ENCODE measurements at regions of chr19 and their contacts with region 1.

Region 1: DNA sequence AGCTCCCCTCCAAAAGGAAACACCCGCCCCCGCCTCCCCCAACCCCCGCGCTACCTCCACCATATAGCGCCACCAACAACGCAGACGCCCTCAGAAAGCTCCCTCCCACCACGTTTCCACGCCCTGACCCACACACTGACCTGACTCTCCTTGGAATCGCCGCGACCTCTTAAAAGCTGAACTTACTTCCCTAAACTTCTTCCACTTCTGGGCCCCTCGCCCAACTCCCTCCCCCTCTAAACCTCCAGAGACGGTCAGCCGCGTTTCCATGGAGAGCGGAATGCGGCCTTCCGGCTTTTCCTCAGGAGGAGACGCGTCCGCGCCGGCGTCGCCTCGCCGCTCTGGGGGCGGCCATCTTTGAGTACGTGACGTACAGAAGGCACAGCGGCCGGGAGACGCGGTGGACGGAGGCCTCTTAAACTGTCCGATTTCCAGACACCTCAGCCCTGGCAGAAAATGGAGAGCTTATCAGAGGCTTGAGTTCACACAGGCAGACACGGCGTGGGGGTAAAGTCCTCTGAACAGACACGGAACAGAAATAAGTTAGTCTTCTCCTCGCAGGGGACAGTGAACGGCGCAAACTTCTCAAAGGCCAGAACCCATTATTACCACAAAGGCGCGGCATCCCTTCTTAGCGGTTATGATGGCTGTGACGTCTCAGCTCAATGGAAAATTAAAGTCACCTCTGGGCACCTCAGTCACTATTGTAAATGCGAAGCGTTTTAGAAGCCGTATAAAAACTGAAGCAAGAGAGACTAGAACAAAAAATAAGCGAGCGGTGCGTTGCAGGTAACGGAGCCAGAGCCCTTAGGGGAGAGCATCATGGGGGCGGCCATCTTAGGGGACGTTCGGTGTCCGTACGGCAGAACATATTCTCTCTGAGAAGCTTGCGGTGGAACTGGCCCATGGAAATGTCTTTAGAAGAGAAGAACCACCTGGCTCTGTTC is at the start of gene ZNF432:
- DNase-seq: peak; percentile 95
- H3K4me3 ChIP-seq: peak within 1 kb of the TSS; percentile 55
- H3K27ac ChIP-seq: peak within 1 kb of the TSS; percentile 92
- H3K4me1 ChIP-seq: no peaks in the 10 kb centered on the region
- H3K27me3 ChIP-seq: no peaks in the 10 kb centered on the region
- CTCF ChIP-seq: no peak
- total RNA-seq, gene ZNF432: 12.6 and 13.2 TPM in 2 replicates

Region 2: GRCh38 chr19:52028027-52028779 is 20.6 kb before region 1 on chr19 and contains the start of gene ZNF614:
- CTCF ChIA-PET with region 1: no interaction called
- POLR2A ChIA-PET with region 1: no interaction called
- intact Hi-C with region 1: loop called (anchors 2 kb)
- DNase-seq: peak; percentile 89
- H3K4me3 ChIP-seq: peak within 1 kb of the TSS; percentile 69
- H3K27ac ChIP-seq: peak within 1 kb of the TSS; percentile 91
- H3K4me1 ChIP-seq: no peaks in the 10 kb centered on the region
- H3K27me3 ChIP-seq: no peaks in the 10 kb centered on the region
- CTCF ChIP-seq: no peak
- total RNA-seq, gene ZNF614: 9.7 and 12.5 TPM in 2 replicates

Region 3: GRCh38 chr19:52171321-52172169 is 122.7 kb after region 1 on chr19 and contains the start of gene ZNF836:
- CTCF ChIA-PET with region 1: no interaction called
- POLR2A ChIA-PET with region 1: no interaction called
- intact Hi-C with region 1: no loop called
- DNase-seq: peak; percentile 77
- H3K4me3 ChIP-seq: peak within 1 kb of the TSS; percentile 73
- H3K27ac ChIP-seq: peak within 1 kb of the TSS; percentile 61
- H3K4me1 ChIP-seq: no peaks in the 10 kb centered on the region
- H3K27me3 ChIP-seq: no peaks in the 10 kb centered on the region
- CTCF ChIP-seq: no peak
- total RNA-seq, gene ZNF836: 6.1 and 7.7 TPM in 2 replicates

Measured in A673 (cell line).